ENCODE measurements at regions of chr12 and their contacts with region 1.

Region 1: GRCh38 chr12:642633-643474 is 20.4 kb downstream of the NINJ2 start:
- DNase-seq: peak; percentile 77
- H3K4me3 Mint-ChIP-seq: peak overlapping the region; percentile 68
- H3K27ac Mint-ChIP-seq: peak overlapping the region; percentile 81
- H3K4me1 Mint-ChIP-seq: peaks cover 43% of the 10 kb centered on the region
- H3K27me3 Mint-ChIP-seq: no peaks in the 10 kb centered on the region

Region 2: DNA sequence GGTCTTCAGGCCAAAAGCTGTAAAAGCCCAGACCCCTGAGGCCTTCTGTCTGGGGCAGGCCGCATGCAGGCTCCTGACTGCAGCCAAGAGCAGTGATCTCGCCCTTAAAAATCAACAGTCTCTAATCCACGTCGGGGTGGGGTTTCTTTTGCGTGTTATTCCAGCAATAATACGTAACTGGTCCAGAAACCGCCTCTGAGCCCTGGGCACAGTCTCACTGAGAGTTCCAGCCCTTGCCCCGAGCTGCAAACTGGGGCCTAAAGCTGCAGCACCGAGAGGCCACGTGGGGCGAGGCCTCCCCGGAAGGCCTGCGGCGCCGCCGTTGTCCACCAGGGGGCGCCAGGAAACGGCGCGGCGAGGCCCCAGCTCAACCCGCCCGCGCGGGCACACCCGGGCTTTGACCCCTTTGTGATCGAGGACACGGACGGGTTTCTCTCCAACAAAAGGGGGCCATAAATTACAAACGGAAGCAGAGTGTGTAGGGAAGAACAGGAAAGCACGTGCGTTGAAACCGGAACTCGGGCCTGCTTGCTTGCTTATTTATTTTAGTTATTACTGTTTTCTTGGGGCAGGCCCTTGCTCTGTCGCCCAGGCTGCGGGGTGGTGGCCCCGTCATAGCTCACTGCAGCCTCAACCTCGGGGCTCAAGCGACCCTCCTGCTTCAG is 66.8 kb before region 1 on chr12:
- intact Hi-C with region 1: loop called (anchors 2 kb)
- DNase-seq: peak; percentile 80
- H3K4me3 Mint-ChIP-seq: no peak overlapping the region
- H3K27ac Mint-ChIP-seq: peak overlapping the region; percentile 74
- H3K4me1 Mint-ChIP-seq: peaks cover 25% of the 10 kb centered on the region
- H3K27me3 Mint-ChIP-seq: peaks cover 3% of the 10 kb centered on the region

Region 3: DNA sequence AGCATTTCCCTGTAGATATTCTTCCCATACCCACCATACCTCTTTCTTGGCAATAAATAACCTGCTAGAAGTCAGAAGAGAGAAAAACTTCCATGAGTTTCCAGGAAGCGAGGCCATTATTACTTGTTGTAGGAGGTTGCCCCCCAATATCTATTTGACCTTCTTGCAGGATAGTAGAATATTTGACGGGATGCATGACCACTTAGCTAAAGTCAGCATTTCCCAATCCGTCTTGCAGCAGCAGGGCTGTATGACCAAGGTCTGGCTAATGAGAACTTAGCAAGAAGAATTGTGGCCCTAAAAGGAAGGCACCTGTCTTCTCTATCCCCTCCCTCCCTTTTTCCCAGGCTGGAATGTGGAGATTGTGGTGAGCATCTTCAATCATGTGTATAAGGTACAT is 31.1 kb before region 1 on chr12:
- intact Hi-C with region 1: loop called (anchors 2 kb)
- DNase-seq: no peak
- H3K4me3 Mint-ChIP-seq: no peak overlapping the region
- H3K27ac Mint-ChIP-seq: no peak overlapping the region
- H3K4me1 Mint-ChIP-seq: peaks cover 33% of the 10 kb centered on the region
- H3K27me3 Mint-ChIP-seq: no peaks in the 10 kb centered on the region

Region 4: GRCh38 chr12:630656-631632 is 11.9 kb before region 1 on chr12:
- intact Hi-C with region 1: loop called (anchors 1 kb)
- DNase-seq: peak; percentile 82
- H3K4me3 Mint-ChIP-seq: peak overlapping the region; percentile 100
- H3K27ac Mint-ChIP-seq: peak overlapping the region; percentile 99
- H3K4me1 Mint-ChIP-seq: peaks cover 27% of the 10 kb centered on the region
- H3K27me3 Mint-ChIP-seq: no peaks in the 10 kb centered on the region